Heart left ventricle (tissue), 16 donors: ENCODE measurements at regions of chr22 and their contacts with region 1.

Region 1: GRCh38 chr22:46542011-46542985 is 4.9 kb upstream of the CELSR1 start:
- DNase-seq: peak; percentile 63 to 89 (median 77)
- ATAC-seq: peak; percentile 60 to 80 (median 74)
- H3K4me3 ChIP-seq: no peak overlapping the region
- H3K27ac ChIP-seq: no peak overlapping the region
- H3K4me1 ChIP-seq: peaks cover 3 to 45% (median 26%) of the 10 kb centered on the region in 12 donors
- H3K27me3 ChIP-seq: peaks cover 0 to 37% (median 11%) of the 10 kb centered on the region in 9 donors
- CTCF ChIP-seq: peak; percentile 79 to 97 (median 90)
- POLR2A ChIP-seq: no peak

Region 2: DNA sequence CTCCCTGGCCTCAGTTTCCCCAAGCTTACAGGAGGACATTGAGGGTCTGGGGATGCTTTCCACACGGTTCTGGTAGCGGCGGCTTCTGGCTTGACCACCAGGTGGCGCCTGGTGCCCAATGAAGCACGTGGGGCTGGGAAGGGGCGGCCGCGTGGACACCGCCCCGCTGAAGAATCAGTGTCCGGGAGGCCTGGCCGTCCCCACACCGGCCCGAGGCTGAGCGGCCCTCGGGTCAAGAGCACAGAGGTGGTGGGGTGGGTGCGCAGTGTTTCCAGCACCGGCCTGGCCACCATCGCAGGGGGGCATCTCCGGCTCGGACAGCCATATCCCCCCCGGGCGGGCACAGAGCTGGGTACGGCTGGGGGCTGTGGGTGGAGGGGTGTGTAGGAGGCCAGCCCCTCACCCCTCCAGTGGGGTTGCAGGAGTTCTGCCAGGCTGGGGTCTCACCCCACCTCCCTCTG is 419.8 kb before region 1 on chr22:
- intact Hi-C with region 1: loop called in 8 of 10 experiments (anchors 2 to 10 kb)
- DNase-seq: peak; percentile 72 to 92 (median 79)
- ATAC-seq: peak; percentile 50 to 72 (median 60)
- H3K4me3 ChIP-seq: no peak overlapping the region
- H3K27ac ChIP-seq: no peak overlapping the region
- H3K4me1 ChIP-seq: peaks cover 0 to 19% (median 6%) of the 10 kb centered on the region in 12 donors
- H3K27me3 ChIP-seq: no peaks in the 10 kb centered on the region
- CTCF ChIP-seq: peak; percentile 92 to 99 (median 95)
- POLR2A ChIP-seq: no peak

Region 3: GRCh38 chr22:46250035-46250782 is 292.1 kb before region 1 on chr22 and contains the start of gene CDPF1:
- intact Hi-C with region 1: loop called in 1 of 10 experiments (anchors 10 kb)
- DNase-seq: peak; percentile 94 to 97 (median 95)
- ATAC-seq: peak; percentile 74 to 94 (median 92)
- H3K4me3 ChIP-seq: peak within 1 kb of the TSS; percentile 53 to 97 (median 81)
- H3K27ac ChIP-seq: peak within 1 kb of the TSS; percentile 69 to 96 (median 94)
- H3K4me1 ChIP-seq: peaks cover 7 to 58% (median 31%) of the 10 kb centered on the region in 12 donors
- H3K27me3 ChIP-seq: no peaks in the 10 kb centered on the region
- CTCF ChIP-seq: peak in 2 of 12 donors; percentile 12 to 31
- POLR2A ChIP-seq: peak; percentile 74 to 96
- total RNA-seq, gene CDPF1: 7.4 to 13.6 (median 9.3) TPM

Region 4: GRCh38 chr22:46355371-46355995 is 186.8 kb before region 1 on chr22:
- intact Hi-C with region 1: loop called in 4 of 10 experiments (anchors 1 to 5 kb)
- DNase-seq: peak; percentile 62 to 74 (median 71)
- ATAC-seq: peak; percentile 11 to 49 (median 18)
- H3K4me3 ChIP-seq: no peak overlapping the region
- H3K27ac ChIP-seq: peak overlapping the region in 4 of 12 donors; percentile 20 to 94 (median 57)
- H3K4me1 ChIP-seq: peaks cover 0 to 47% (median 17%) of the 10 kb centered on the region in 12 donors
- H3K27me3 ChIP-seq: no peaks in the 10 kb centered on the region
- CTCF ChIP-seq: peak; percentile 58 to 83 (median 73)
- POLR2A ChIP-seq: no peak

Region 5: GRCh38 chr22:46367707-46368191 is 174.5 kb before region 1 on chr22:
- intact Hi-C with region 1: loop called in 7 of 10 experiments (anchors 1 to 5 kb)
- DNase-seq: peak; percentile 40 to 82 (median 62)
- ATAC-seq: peak in 3 of 4 donors; percentile 42 to 73 (median 65)
- H3K4me3 ChIP-seq: no peak overlapping the region
- H3K27ac ChIP-seq: no peak overlapping the region
- H3K4me1 ChIP-seq: no peaks in the 10 kb centered on the region
- H3K27me3 ChIP-seq: peaks cover 0 to 11% (median 0%) of the 10 kb centered on the region in 9 donors
- CTCF ChIP-seq: peak; percentile 74 to 90 (median 81)
- POLR2A ChIP-seq: no peak

Region 6: DNA sequence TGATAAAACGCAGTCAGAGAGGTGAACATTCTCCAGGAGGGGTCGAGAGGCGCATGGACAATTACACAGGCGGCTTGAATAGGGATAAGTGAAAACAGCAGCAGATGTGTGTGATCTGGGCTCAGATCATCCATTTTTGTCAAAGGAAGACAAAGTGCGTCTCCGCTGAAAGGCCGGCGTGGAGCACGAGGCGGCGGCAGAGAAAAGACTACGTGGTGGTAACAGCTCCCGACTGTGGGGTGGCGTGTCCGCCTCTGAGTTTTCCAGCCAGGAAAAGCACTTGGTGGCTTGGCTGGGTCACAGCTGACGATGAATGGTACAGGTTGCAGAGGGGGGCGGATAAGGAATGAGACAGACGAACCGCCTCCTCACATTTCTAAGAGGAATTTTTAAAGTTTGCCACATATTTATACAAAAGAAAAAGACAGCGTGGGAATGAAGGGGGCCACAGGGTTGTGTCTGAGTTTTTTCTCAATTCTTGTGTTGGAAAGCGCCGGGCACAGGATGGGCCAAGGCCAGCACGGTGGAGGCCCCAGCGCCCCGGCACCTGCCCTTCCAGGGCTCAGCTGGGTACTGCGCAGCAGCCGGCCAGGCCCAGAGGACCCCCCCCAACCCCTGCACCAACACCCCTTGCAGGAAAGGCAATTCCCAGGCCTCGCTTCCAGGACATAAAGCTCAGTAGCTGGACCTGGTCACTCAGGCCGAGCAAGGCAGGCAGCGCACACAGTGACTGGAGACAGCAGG is 126.3 kb before region 1 on chr22:
- intact Hi-C with region 1: loop called in 1 of 10 experiments (anchors 10 kb)
- DNase-seq: peak in 2 of 5 donors; percentile 21 to 51
- ATAC-seq: no peak
- H3K4me3 ChIP-seq: no peak overlapping the region
- H3K27ac ChIP-seq: no peak overlapping the region
- H3K4me1 ChIP-seq: peaks cover 0 to 22% (median 14%) of the 10 kb centered on the region in 12 donors
- H3K27me3 ChIP-seq: no peaks in the 10 kb centered on the region
- CTCF ChIP-seq: no peak
- POLR2A ChIP-seq: no peak

Region 7: GRCh38 chr22:46674367-46674781 is 132.1 kb after region 1 on chr22:
- intact Hi-C with region 1: no loop called
- DNase-seq: peak; percentile 73 to 87 (median 84)
- ATAC-seq: peak; percentile 13 to 84 (median 34)
- H3K4me3 ChIP-seq: peak overlapping the region in 10 of 12 donors; percentile 22 to 61 (median 44)
- H3K27ac ChIP-seq: peak overlapping the region; percentile 15 to 86 (median 69)
- H3K4me1 ChIP-seq: peaks cover 0 to 47% (median 16%) of the 10 kb centered on the region in 12 donors
- H3K27me3 ChIP-seq: no peaks in the 10 kb centered on the region
- CTCF ChIP-seq: no peak
- POLR2A ChIP-seq: no peak